WTC11 (cell line): ENCODE measurements at regions of chr11 and their contacts with region 1.

Region 1: GRCh38 chr11:46006418-46007070 is 84.1 kb downstream of the LARGE2 start:
- DNase-seq: no peak
- ATAC-seq: peak; percentile 74
- H3K4me3 Mint-ChIP-seq: no peak overlapping the region
- H3K27ac Mint-ChIP-seq: peak overlapping the region; percentile 58
- H3K4me1 Mint-ChIP-seq: peaks cover 52% of the 10 kb centered on the region
- H3K27me3 Mint-ChIP-seq: no peaks in the 10 kb centered on the region
- CTCF ChIP-seq: peak; percentile 61

Region 2: DNA sequence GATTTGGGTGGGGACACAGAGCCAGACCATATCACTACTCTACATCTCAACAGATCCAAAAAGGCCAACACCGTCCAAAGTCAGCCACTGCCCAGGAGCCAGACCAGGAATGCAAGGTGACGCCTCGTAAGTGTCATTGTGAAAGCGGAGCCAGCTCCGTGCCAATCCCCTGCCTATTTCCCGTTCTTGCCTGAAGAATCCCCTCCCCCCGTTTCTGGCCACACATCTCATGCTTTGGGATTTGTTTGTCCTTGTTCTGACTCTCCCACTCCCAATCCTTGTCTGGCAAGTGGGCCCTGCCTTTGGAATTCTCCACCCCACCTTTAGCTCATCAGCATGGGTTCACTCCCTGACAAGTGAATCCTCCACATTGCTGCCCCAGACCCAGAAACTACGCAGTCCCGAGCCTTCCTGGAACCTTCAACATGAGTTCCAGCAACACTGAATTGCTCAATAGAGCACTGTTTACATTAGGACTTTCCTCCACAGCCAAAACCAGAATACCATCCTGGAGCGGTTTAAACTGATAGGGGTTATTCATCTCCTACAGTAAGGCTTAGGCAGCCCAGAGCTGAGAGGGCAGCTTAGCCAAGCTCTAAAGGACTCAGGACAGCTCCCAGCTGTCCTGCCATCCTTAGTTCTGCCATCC is 207.6 kb before region 1 on chr11:
- CTCF ChIA-PET with region 1: no interaction called
- POLR2A ChIA-PET with region 1: no interaction called
- DNase-seq: no peak
- ATAC-seq: no peak
- H3K4me3 Mint-ChIP-seq: no peak overlapping the region
- H3K27ac Mint-ChIP-seq: no peak overlapping the region
- H3K4me1 Mint-ChIP-seq: 0 out of 2 replicates have a peak, but pooled peaks cover 2% of the 10 kb centered on the region
- H3K27me3 Mint-ChIP-seq: peaks cover 31% of the 10 kb centered on the region
- CTCF ChIP-seq: no peak

Region 3: GRCh38 chr11:45872513-45873356 is 133.8 kb before region 1 on chr11:
- CTCF ChIA-PET with region 1: interaction called, 28 read pairs
- POLR2A ChIA-PET with region 1: no interaction called
- DNase-seq: peak; percentile 87
- ATAC-seq: peak; percentile 100
- H3K4me3 Mint-ChIP-seq: no peak overlapping the region
- H3K27ac Mint-ChIP-seq: no peak overlapping the region
- H3K4me1 Mint-ChIP-seq: peaks cover 27% of the 10 kb centered on the region
- H3K27me3 Mint-ChIP-seq: no peaks in the 10 kb centered on the region
- CTCF ChIP-seq: peak; percentile 68

Region 4: DNA sequence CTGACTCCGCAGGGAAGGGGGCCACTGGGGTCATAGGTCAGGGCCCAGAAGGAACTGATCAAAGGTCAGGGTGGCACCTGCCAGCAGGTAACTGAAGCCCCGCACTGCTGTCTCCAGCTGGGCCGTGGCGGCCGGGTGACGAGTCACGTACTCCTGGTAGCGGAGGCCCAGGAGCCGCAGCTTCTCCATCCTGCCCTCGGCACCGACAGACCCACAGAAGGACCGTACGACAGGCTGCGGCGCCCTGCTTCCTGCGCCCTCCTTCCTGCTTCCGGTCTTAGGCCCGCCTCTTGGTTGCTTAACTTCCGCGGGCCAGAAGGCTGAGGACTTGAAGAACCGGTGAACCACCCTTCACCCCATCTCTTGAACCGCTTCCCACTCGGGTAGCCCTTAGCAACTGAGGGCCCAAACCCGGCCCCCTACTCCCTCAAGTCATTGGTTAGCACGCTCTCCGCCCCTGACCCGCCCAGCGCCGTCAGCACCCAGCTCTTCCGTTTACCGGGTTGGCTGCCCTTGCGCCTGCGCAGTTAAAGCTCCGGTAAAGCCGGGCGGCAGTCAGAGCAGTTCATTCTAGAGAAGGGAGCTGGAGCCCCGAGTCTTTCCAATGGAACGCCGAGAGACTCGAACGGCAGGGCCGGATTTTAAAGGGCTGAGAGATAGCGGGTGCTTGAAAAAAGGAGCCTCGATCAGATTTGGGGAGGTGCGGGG is 88.8 kb before region 1 on chr11 and contains the start of gene PEX16:
- CTCF ChIA-PET with region 1: interaction called, 17 read pairs
- POLR2A ChIA-PET with region 1: interaction called, 9 read pairs
- DNase-seq: peak; percentile 94
- ATAC-seq: peak; percentile 68
- H3K4me3 Mint-ChIP-seq: peak within 1 kb of the TSS; percentile 93
- H3K27ac Mint-ChIP-seq: peak within 1 kb of the TSS; percentile 96
- H3K4me1 Mint-ChIP-seq: peaks cover 32% of the 10 kb centered on the region
- H3K27me3 Mint-ChIP-seq: peaks cover 2% of the 10 kb centered on the region; the same call in 1 of the 2 replicates
- CTCF ChIP-seq: no peak
- total RNA-seq, gene PEX16: 35.8 to 39.3 TPM (median 36.0 TPM) in 3 replicates

Region 5: GRCh38 chr11:45974806-45975205 is 31.7 kb before region 1 on chr11:
- CTCF ChIA-PET with region 1: interaction called, 16 read pairs
- POLR2A ChIA-PET with region 1: no interaction called
- DNase-seq: no peak
- ATAC-seq: no peak
- H3K4me3 Mint-ChIP-seq: no peak overlapping the region
- H3K27ac Mint-ChIP-seq: no peak overlapping the region
- H3K4me1 Mint-ChIP-seq: no peaks in the 10 kb centered on the region
- H3K27me3 Mint-ChIP-seq: no peaks in the 10 kb centered on the region
- CTCF ChIP-seq: no peak

Region 6: GRCh38 chr11:45993531-45994001 is 13.0 kb before region 1 on chr11:
- CTCF ChIA-PET with region 1: interaction called, 52 read pairs
- POLR2A ChIA-PET with region 1: no interaction called
- DNase-seq: no peak
- ATAC-seq: no peak
- H3K4me3 Mint-ChIP-seq: no peak overlapping the region
- H3K27ac Mint-ChIP-seq: peak overlapping the region; percentile 90
- H3K4me1 Mint-ChIP-seq: peaks cover 52% of the 10 kb centered on the region
- H3K27me3 Mint-ChIP-seq: no peaks in the 10 kb centered on the region
- CTCF ChIP-seq: no peak